Ovary (tissue), 10 donors: ENCODE measurements at regions of chr4 and their contacts with region 1.

Region 1: DNA sequence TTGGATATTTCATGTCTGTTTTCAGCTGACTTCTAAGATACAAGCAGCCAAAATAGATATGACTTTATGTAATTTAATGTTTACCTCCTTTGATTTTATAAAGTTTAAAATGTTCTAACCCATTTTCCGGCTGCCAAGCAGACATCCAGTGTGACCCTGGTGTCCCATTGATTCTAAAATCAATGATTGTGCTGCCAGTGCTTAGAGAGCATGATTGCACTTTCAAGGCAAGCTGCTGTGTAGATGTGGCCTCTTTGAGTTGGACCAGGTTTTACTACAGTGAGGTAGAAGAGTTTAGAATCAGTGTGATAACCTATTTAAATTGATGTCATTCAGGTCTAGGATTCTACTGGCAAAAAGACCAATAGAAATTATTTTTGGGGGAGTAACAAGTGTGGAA is 730.9 kb downstream of the STPG2 start:
- DNase-seq: no peak
- H3K4me3 ChIP-seq: no peak overlapping the region
- H3K27ac ChIP-seq: no peak overlapping the region
- H3K4me1 ChIP-seq: peaks cover 3% of the 10 kb centered on the region
- H3K27me3 ChIP-seq: no peaks in the 10 kb centered on the region
- CTCF ChIP-seq: no peak
- EP300 ChIP-seq: no peak
- POLR2A ChIP-seq: no peak

Region 2: GRCh38 chr4:97453186-97453585 is 40.9 kb after region 1 on chr4:
- intact Hi-C with region 1: loop called in 1 of 4 experiments (anchors 2 kb)
- DNase-seq: no peak
- H3K4me3 ChIP-seq: no peak overlapping the region
- H3K27ac ChIP-seq: no peak overlapping the region
- H3K4me1 ChIP-seq: no peaks in the 10 kb centered on the region
- H3K27me3 ChIP-seq: no peaks in the 10 kb centered on the region
- CTCF ChIP-seq: no peak
- EP300 ChIP-seq: no peak
- POLR2A ChIP-seq: no peak

Region 3: GRCh38 chr4:97627750-97628149 is 215.4 kb after region 1 on chr4:
- intact Hi-C with region 1: no loop called
- DNase-seq: no peak
- H3K4me3 ChIP-seq: no peak overlapping the region
- H3K27ac ChIP-seq: no peak overlapping the region
- H3K4me1 ChIP-seq: no peaks in the 10 kb centered on the region
- H3K27me3 ChIP-seq: no peaks in the 10 kb centered on the region
- CTCF ChIP-seq: no peak
- EP300 ChIP-seq: no peak
- POLR2A ChIP-seq: no peak

Region 4: GRCh38 chr4:97987019-97987648 is 574.8 kb after region 1 on chr4:
- intact Hi-C with region 1: no loop called
- DNase-seq: no peak
- H3K4me3 ChIP-seq: no peak overlapping the region
- H3K27ac ChIP-seq: no peak overlapping the region
- H3K4me1 ChIP-seq: no peaks in the 10 kb centered on the region
- H3K27me3 ChIP-seq: no peaks in the 10 kb centered on the region
- CTCF ChIP-seq: no peak
- EP300 ChIP-seq: no peak
- POLR2A ChIP-seq: no peak